RWPE1 (cell line): ENCODE measurements at regions of chr6 and their contacts with region 1.

Region 1: DNA sequence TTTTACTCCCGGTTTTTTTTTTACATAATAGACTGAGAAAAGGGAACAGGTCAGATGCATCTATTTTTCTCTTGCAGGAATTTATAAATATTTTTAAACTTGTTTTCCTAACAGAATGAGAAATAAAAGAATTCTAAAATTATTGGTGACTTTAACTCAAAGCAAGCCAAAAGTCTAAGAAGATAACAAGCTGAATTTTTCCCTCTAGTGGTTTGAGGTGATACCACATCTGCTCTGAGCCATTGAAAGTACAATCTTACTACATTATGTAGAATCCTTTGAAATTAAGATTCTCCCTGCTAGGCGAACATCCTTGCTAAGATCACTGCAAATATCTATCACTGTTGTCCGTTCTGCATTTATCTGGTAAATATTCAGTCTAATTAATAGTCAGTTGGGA is 10.7 kb upstream of the STMND1 start:
- DNase-seq: no peak
- H3K27ac ChIP-seq: no peak overlapping the region
- CTCF ChIP-seq: no peak; the same call in 1 of the 2 replicates

Region 2: GRCh38 chr6:16585805-16586204 is 505.3 kb before region 1 on chr6:
- CTCF ChIA-PET with region 1: no interaction called
- POLR2A ChIA-PET with region 1: no interaction called
- DNase-seq: no peak
- H3K27ac ChIP-seq: no peak overlapping the region
- CTCF ChIP-seq: no peak

Region 3: GRCh38 chr6:16872543-16873235 is 218.4 kb before region 1 on chr6:
- CTCF ChIA-PET with region 1: no interaction called
- POLR2A ChIA-PET with region 1: no interaction called
- DNase-seq: no peak
- H3K27ac ChIP-seq: no peak overlapping the region
- CTCF ChIP-seq: no peak

Region 4: DNA sequence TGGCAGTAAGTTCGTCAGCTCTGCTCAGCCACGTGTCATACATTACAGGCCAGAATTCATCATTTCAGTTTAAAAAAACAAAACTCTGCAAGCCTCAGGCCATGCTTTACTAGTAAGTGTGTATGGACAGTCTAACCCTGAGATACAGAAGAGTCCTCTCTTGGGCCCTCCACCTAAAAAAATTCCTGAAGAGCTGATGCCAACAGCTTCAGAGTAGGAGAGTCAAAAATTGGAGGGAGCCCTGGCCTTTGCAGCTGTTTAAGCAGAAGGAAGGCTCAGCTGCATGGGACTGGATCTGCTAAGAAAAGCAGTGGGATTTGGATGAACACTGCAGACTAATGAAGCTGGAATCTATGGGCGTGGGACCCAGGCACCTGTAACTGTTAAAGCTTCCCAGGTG is 461.7 kb after region 1 on chr6:
- CTCF ChIA-PET with region 1: interaction called, 10 read pairs
- POLR2A ChIA-PET with region 1: no interaction called
- DNase-seq: no peak
- H3K27ac ChIP-seq: no peak overlapping the region
- CTCF ChIP-seq: no peak